HepG2 (cell line): ENCODE measurements at regions of chr22 and their contacts with region 1.

Region 1: DNA sequence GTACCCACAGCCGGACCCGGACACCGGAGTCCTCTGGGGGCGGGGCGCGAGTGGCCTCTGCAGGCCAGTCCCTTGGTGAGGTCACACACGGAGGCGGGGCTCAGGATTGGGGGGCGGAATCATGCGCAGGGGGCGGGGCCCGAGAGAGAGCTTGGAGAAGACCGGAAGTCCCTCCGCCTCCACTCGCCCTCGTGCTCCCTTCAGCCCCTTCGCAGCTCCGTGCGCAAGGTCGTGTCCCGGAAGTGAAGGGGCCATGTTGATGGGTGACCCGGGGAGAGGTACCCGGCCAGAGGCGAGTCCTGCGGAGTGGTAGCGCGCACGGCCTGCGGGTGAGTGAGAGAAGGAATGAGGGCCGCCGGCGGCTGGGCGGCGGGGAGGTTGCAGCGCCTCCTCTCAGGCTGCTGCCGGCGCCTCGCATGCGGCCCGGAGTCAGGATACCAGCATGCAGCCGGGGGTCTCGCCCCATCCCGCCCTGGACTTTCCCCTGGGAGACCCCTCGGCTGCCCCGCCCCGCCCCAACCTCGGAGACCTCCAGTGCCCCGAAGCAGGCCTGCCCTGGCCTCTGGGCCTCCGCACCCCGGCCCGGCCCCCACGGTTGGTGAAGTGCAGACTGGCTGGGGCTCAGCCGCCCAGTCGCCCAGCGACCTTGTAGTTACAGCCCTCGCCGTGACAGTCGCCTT is at the start of gene MIEF1:
- DNase-seq: peak; percentile 96
- ATAC-seq: peak; percentile 95
- H3K4me3 ChIP-seq: peak within 1 kb of the TSS; percentile 80 to 93 (median 91)
- H3K27ac ChIP-seq: peak within 1 kb of the TSS; percentile 94
- H3K4me1 ChIP-seq: peaks cover 64% of the 10 kb centered on the region
- H3K27me3 ChIP-seq: no peaks in the 10 kb centered on the region
- CTCF ChIP-seq: no peak; the same call in 1 of the 2 replicates
- EP300 ChIP-seq: no peak
- POLR2A ChIP-seq: peak; percentile 71 to 85
- RAD21 ChIP-seq: no peak
- total RNA-seq, gene MIEF1: 34.8 and 41.4 TPM in 2 replicates

Region 2: DNA sequence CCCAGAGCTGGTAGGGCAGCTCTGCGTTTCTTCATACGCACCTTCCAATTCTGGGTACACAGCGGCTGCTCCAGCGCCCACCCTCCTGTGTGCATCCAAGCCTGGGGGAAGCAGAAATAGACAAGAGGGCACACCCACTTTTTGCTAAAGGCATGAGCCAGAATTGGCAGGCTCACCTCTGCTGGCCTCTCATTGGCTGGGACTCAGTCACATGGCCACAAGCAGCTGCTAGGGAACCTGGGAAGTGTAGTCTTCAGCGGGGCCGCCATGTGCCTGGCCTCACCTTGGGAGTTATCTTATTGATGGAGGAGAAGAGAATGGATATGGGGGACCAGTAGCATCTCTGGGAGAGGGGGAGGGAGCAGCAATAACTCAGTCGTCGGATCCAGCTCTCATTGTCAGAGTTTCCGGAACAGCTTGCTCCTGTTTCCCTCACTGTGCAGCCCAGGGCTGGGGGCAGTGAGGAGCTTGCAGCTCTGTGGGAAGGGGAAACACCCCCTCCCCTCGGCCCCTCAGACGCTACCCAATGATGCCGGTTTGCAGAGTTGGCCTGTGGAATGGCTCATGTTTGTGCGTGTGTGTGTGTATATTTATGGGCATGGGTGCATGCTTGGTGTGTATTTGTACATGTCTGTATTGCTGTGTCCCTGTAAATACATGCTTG is 12.0 kb before region 1 on chr22:
- CTCF ChIA-PET with region 1: no interaction called
- POLR2A ChIA-PET with region 1: interaction called, 12 read pairs
- in situ Hi-C with region 1: no loop called
- intact Hi-C with region 1: no loop called
- DNase-seq: peak; percentile 62
- ATAC-seq: peak; percentile 89
- H3K4me3 ChIP-seq: peak overlapping the region in 1 of 3 experiments; percentile 9; a peak in 1 of 6 replicates
- H3K27ac ChIP-seq: no peak overlapping the region
- H3K4me1 ChIP-seq: peaks cover 21% of the 10 kb centered on the region
- H3K27me3 ChIP-seq: peaks cover 0 to 2% of the 10 kb centered on the region in 2 experiments; a peak in 1 of 5 replicates
- CTCF ChIP-seq: no peak
- EP300 ChIP-seq: no peak
- POLR2A ChIP-seq: no peak
- RAD21 ChIP-seq: no peak